Psoas muscle (tissue), 8 donors: ENCODE measurements at regions of chr16 and their contacts with region 1.

Region 1: DNA sequence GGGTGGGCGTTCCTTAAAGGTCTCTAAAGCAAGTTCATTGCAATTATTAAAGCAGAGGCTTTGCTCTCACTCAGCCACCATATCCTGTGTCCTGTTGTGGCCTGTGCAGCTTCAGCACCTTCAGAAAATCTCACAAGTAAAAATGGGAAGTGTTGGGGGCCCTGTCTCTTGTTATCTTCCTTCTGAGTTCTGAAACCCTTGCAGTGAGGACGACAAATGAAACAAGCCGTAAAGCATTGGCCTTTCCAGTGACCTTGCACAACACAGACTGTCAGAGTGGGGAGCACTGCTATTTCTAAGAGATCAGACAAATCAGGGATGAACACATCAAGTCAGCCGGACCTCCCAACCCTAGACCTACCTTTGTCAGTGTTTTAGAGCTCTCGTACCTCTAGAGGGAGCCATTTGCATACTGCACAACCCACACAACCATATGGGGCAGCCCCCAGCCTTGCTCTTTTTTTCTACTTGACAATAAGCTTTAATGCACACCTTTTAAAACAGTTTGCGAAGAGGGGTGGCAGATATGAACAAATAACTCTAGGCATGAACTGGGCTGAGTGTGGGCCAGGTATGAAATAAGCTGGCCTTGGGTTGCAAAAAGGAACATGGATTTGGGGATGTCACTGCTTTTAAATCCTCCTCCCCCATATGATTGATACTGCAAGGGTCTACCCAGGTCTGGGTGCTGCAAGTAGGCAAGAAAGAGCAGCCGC is 89.8 kb downstream of the KATNIP start:
- DNase-seq: no peak
- ATAC-seq: peak in 3 of 4 donors; percentile 53 to 78 (median 77)
- H3K4me3 ChIP-seq: no peak overlapping the region
- H3K27ac ChIP-seq: no peak overlapping the region
- H3K4me1 ChIP-seq: no peaks in the 10 kb centered on the region
- H3K27me3 ChIP-seq: no peaks in the 10 kb centered on the region
- CTCF ChIP-seq: peak; percentile 47

Region 2: GRCh38 chr16:27867122-27868110 is 227.7 kb after region 1 on chr16:
- intact Hi-C with region 1: loop called in 1 of 2 experiments (anchors 5 kb)
- DNase-seq: peak; percentile 48 to 54
- ATAC-seq: peak in 3 of 4 donors; percentile 27 to 62 (median 53)
- H3K4me3 ChIP-seq: no peak overlapping the region
- H3K27ac ChIP-seq: no peak overlapping the region
- H3K4me1 ChIP-seq: no peaks in the 10 kb centered on the region
- H3K27me3 ChIP-seq: no peaks in the 10 kb centered on the region
- CTCF ChIP-seq: no peak

Region 3: DNA sequence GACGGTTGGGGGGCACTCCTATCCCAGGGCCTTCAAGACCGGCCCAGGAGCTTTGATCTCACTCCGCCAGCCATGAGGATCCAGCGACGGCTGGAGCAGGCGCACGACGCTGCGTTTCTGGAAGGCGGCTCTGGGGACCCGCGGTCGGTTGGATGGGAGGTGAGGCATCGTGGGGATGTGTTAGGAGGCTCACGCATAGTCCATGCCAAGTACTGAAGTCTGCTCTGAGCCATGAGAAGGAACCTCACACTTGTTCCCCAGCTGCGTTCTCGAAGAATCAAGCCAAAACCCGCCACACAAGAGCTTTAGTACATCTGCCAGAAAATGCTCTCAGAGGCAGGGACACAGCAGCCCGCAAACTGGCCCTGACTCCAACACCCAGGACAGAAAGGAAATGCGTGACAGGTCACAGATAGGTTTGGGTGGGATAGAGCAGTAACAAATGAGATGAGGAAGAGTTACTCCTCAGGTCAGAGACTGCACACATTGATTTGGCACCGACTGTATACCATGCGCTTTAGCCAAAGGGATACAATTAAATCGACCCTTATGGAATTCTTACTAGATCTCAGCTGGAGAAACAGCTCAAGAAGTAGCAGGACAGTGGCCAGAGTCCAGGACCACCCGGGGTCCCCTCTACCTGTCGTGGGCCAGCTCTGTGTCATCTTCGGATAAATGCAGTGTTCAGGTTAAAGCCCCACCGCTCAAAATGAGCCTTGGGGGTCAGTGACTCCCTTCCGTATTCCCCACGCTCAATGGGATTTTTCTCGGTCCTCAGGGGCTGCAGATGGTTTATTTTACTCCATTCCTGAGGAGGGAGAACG is 430.5 kb after region 1 on chr16:
- intact Hi-C with region 1: loop called (anchors 5 kb)
- DNase-seq: no peak
- ATAC-seq: peak in 2 of 4 donors; percentile 23 to 29
- H3K4me3 ChIP-seq: no peak overlapping the region
- H3K27ac ChIP-seq: no peak overlapping the region
- H3K4me1 ChIP-seq: peaks cover 7% of the 10 kb centered on the region
- H3K27me3 ChIP-seq: no peaks in the 10 kb centered on the region
- CTCF ChIP-seq: no peak